ENCODE measurements at regions of chr11 and their contacts with region 1.

Region 1: GRCh38 chr11:60831143-60831500 is 10.8 kb upstream of the CCDC86 start:
- DNase-seq: peak; percentile 85
- ATAC-seq: peak; percentile 90 to 91

Region 2: GRCh38 chr11:60775420-60775961 is 55.6 kb before region 1 on chr11:
- intact Hi-C with region 1: loop called in 1 of 2 experiments (anchors 2 kb)
- DNase-seq: peak; percentile 86
- ATAC-seq: peak; percentile 87 to 89

Region 3: DNA sequence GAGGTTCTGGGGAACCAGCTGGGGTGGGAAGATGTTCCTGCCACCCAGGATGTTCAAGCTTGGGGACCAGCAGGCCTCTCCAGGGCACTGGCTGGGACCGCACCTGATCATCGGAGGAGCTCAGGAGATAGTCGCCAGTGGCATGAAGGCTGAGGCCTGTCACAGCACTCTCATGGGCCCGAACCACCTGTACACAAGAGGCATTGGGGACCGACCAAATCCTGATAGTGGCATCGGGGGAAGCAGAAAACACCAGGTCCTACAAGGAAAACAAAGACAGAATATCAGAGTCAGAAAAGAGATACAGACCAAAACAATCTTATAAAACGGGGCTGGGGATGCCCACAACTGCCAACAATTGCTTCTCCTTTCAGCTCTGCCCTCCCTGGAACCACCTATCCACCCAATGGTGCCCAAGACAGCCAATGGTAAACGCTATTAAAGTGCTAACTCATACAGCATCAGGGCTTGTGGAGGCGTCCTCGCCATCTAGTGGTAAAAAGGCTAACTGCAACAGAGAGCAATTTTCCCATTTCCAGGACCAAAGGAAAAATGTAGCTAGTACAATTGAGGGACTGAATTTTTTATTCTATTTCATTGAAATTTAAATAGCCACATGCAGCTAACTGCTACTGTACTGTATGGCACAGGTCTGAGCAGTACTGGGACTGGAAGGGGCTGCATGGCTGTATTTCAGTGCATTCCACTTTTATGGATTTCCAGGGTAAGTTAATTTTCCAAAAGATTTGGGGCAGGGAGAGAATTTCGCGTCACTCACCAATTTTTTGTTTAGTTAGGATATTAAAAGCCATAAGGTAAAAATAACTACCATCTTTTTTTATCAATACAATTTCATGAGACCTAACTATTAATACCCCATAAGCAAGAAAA is 68.2 kb after region 1 on chr11:
- intact Hi-C with region 1: loop called (anchors 2 to 5 kb)
- DNase-seq: no peak
- ATAC-seq: peak; percentile 73

Region 4: DNA sequence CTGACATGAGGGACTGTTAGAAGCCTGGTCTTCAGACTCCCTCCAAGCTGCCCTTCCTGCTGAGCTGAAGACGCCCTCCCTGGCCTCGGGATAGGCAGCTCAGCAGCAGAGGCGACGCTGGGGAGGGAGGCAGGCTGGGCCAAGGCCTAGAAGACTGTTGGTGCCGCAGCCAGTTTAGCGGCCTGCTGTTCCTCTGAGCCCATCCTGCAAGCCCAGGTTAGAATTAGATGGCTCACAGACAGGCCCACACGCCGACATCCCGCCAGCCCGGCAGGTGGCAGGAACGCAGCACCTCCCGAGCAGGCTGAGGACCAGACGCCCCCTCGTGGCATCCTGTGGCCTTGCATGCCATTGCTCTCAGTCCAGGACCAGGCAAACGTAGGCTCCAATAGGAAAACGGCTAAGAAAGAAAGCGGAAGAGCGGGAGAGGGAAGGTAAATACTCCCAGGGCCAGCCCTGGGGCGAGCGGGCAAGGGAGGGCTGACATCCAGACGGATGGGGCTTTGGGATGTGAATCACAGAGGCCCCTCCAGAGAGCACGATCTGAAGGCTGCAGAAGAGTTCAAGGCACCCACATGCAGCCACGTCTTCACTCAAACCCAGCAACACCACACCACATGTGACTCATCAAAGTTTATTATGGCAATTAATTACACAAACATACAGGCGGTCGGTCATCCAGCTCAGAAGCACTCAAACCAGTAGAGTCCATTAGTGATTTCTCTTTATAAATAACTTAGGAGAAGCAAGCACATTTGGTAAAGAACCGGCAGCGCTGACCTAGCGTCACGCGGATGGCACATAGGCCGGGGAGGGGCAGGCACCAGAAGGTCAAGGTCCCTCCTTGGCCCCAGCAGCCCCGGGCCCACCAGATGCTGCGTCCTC is 298.8 kb after region 1 on chr11:
- intact Hi-C with region 1: loop called in 1 of 2 experiments (anchors 10 kb)
- DNase-seq: peak; percentile 88
- ATAC-seq: peak; percentile 85 to 91

Region 5: GRCh38 chr11:61187505-61188130 is 356.5 kb after region 1 on chr11:
- intact Hi-C with region 1: loop called in 1 of 2 experiments (anchors 5 kb)
- DNase-seq: peak; percentile 81
- ATAC-seq: peak; percentile 72 to 77

Measured in left cardiac atrium (tissue), 4 donors.